Heart right ventricle (tissue), 16 donors: ENCODE measurements at regions of chr15 and their contacts with region 1.

Region 1: DNA sequence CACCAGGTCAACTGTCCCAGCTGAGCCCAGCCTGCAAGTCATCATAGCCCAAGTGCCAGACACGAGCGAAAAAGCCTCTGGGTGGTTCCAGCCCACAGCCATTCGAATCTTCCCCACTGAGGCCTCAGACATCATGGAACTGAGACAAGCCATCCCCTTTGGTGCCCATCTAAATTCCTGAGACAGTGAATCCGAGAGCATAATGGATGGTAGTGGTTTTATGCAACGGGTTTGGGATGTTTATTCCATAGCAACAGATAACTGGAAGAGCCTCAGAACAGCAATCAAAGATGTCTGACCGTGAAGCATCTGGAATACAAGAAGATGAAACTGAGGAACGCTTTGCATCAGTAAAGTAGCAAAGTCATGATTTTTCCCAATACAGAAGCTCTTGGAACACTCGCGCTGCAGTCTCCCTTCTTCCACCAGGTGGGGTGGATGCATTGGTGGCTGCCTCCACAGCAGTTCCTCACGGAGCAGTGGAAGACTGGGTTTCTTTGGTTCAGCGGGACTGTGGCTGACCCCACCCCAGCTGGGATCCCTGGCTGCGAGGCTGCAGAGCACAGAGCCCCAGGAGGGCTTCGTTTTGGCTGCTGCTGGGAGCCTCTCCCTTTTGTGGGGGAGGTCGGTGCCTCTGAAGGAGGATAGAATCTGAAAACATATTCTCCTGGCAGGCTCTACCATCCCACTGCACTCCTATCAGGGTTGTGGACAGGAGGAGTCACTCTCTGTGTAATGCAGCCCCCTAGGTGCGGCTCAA is 26.4 kb upstream of the PDE8A start:
- DNase-seq: peak; percentile 71 to 81
- ATAC-seq: peak; percentile 83 to 98 (median 96)
- H3K4me3 ChIP-seq: peak overlapping the region in 8 of 10 donors; percentile 18 to 40 (median 38)
- H3K27ac ChIP-seq: peak overlapping the region in 3 of 10 donors; percentile 0 to 29 (median 26)
- H3K4me1 ChIP-seq: peaks cover 3 to 24% (median 11%) of the 10 kb centered on the region in 9 donors
- H3K27me3 ChIP-seq: no peaks in the 10 kb centered on the region
- CTCF ChIP-seq: peak; percentile 79 to 97 (median 87)

Region 2: GRCh38 chr15:85005319-85005718 is 50.0 kb after region 1 on chr15:
- intact Hi-C with region 1: loop called in 1 of 10 experiments (anchors 10 kb)
- DNase-seq: no peak
- ATAC-seq: no peak
- H3K4me3 ChIP-seq: no peak overlapping the region
- H3K27ac ChIP-seq: peak overlapping the region in 1 of 10 donors; percentile 51
- H3K4me1 ChIP-seq: peaks cover 26 to 97% (median 76%) of the 10 kb centered on the region in 9 donors
- H3K27me3 ChIP-seq: no peaks in the 10 kb centered on the region
- CTCF ChIP-seq: peak in 2 of 9 donors; percentile 15 to 30

Region 3: GRCh38 chr15:85036716-85037115 is 81.4 kb after region 1 on chr15:
- intact Hi-C with region 1: loop called in 2 of 10 experiments (anchors 5 kb)
- DNase-seq: no peak
- ATAC-seq: peak in 7 of 8 donors; percentile 55 to 73 (median 64)
- H3K4me3 ChIP-seq: no peak overlapping the region
- H3K27ac ChIP-seq: peak overlapping the region in 3 of 10 donors; percentile 2 to 54 (median 45)
- H3K4me1 ChIP-seq: peaks cover 10 to 63% (median 35%) of the 10 kb centered on the region in 9 donors
- H3K27me3 ChIP-seq: no peaks in the 10 kb centered on the region
- CTCF ChIP-seq: no peak

Region 4: GRCh38 chr15:85044251-85044853 is 89.1 kb after region 1 on chr15:
- intact Hi-C with region 1: loop called in 8 of 10 experiments (anchors 1 to 5 kb)
- DNase-seq: peak in 1 of 2 donors; percentile 78
- ATAC-seq: peak; percentile 67 to 80 (median 72)
- H3K4me3 ChIP-seq: no peak overlapping the region
- H3K27ac ChIP-seq: peak overlapping the region in 4 of 10 donors; percentile 73 to 88 (median 78)
- H3K4me1 ChIP-seq: peaks cover 0 to 63% (median 39%) of the 10 kb centered on the region in 9 donors
- H3K27me3 ChIP-seq: no peaks in the 10 kb centered on the region
- CTCF ChIP-seq: peak; percentile 49 to 80 (median 70)

Region 5: GRCh38 chr15:85094685-85095084 is 139.4 kb after region 1 on chr15:
- intact Hi-C with region 1: no loop called
- DNase-seq: no peak
- ATAC-seq: peak in 1 of 8 donors; percentile 13
- H3K4me3 ChIP-seq: no peak overlapping the region
- H3K27ac ChIP-seq: no peak overlapping the region
- H3K4me1 ChIP-seq: no peaks in the 10 kb centered on the region
- H3K27me3 ChIP-seq: no peaks in the 10 kb centered on the region
- CTCF ChIP-seq: no peak

Region 6: GRCh38 chr15:85168642-85169173 is 213.4 kb after region 1 on chr15:
- intact Hi-C with region 1: loop called in 1 of 10 experiments (anchors 10 kb)
- DNase-seq: no peak
- ATAC-seq: peak in 5 of 8 donors; percentile 17 to 29 (median 26)
- H3K4me3 ChIP-seq: peak overlapping the region in 6 of 10 donors; percentile 10 to 35 (median 26)
- H3K27ac ChIP-seq: no peak overlapping the region
- H3K4me1 ChIP-seq: peaks cover 0 to 9% (median 5%) of the 10 kb centered on the region in 9 donors
- H3K27me3 ChIP-seq: peaks cover 0 to 18% (median 0%) of the 10 kb centered on the region in 7 donors
- CTCF ChIP-seq: peak in 7 of 9 donors; percentile 30 to 58 (median 49)